SK-N-SH (cell line): ENCODE measurements at regions of chr4 and their contacts with region 1.

Region 1: GRCh38 chr4:42568610-42569207 is 88.2 kb downstream of the ATP8A1 start:
- DNase-seq: peak; percentile 64
- H3K4me3 ChIP-seq: no peak overlapping the region
- H3K27ac ChIP-seq: no peak overlapping the region
- H3K4me1 ChIP-seq: peaks cover 0 to 13% of the 10 kb centered on the region in 2 experiments; a peak in 2 of 4 replicates
- H3K27me3 ChIP-seq: no peaks in the 10 kb centered on the region
- CTCF ChIP-seq: peak; percentile 78
- EP300 ChIP-seq: no peak
- RAD21 ChIP-seq: peak; percentile 92

Region 2: DNA sequence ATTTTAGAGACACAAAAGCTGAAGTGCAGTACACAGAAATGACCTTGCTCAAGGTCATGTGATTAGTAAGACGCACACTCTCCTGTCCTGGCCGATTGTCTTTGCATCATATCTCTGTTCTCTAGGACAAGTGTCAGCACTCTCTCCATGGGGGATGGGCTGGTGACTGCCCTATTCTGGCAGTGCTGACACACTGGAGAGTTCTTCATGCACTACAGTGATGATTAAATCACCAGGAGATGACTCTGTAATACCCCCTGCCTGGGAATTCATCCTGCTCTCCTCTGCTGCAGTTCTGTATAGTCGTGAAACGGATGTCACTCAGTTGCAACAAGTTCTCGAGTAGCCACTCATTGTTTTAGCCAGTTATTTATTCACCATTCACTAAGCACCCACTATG is 176.7 kb before region 1 on chr4:
- CTCF ChIA-PET with region 1: no interaction called
- POLR2A ChIA-PET with region 1: no interaction called
- DNase-seq: no peak
- H3K4me3 ChIP-seq: no peak overlapping the region
- H3K27ac ChIP-seq: no peak overlapping the region
- H3K4me1 ChIP-seq: peaks cover 0 to 5% of the 10 kb centered on the region in 2 experiments; a peak in 1 of 4 replicates
- H3K27me3 ChIP-seq: peaks cover 8% of the 10 kb centered on the region
- CTCF ChIP-seq: no peak
- EP300 ChIP-seq: no peak
- RAD21 ChIP-seq: no peak

Region 3: DNA sequence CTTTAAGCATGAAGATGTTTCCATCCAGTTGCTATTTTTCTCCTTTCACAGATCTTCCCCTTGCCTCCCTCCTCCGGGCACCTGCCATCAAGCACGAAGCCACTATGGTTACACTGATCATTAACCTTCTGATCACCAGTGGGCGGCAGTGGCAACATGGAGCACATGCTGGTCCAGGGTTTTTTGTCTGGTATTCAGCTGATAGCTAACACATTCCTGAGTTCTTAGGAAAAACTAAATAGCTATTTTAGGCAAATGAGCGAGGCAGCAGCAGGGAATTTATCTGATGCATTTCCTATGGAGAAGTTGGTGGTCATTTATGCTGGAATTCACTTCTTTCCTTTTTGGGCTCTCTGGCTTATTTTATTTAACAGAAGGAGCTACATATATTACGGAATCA is 148.6 kb before region 1 on chr4:
- CTCF ChIA-PET with region 1: no interaction called
- POLR2A ChIA-PET with region 1: no interaction called
- DNase-seq: no peak
- H3K4me3 ChIP-seq: no peak overlapping the region
- H3K27ac ChIP-seq: no peak overlapping the region
- H3K4me1 ChIP-seq: no peaks in the 10 kb centered on the region; a peak in 1 of 4 replicates
- H3K27me3 ChIP-seq: no peaks in the 10 kb centered on the region
- CTCF ChIP-seq: no peak
- EP300 ChIP-seq: no peak
- RAD21 ChIP-seq: no peak

Region 4: GRCh38 chr4:42750091-42750490 is 181.4 kb after region 1 on chr4:
- CTCF ChIA-PET with region 1: interaction called, 18 read pairs
- POLR2A ChIA-PET with region 1: no interaction called
- DNase-seq: peak; percentile 39
- H3K4me3 ChIP-seq: no peak overlapping the region
- H3K27ac ChIP-seq: no peak overlapping the region
- H3K4me1 ChIP-seq: no peaks in the 10 kb centered on the region; a peak in 2 of 4 replicates
- H3K27me3 ChIP-seq: no peaks in the 10 kb centered on the region
- CTCF ChIP-seq: peak; percentile 28; the same call in 1 of the 2 replicates
- EP300 ChIP-seq: no peak
- RAD21 ChIP-seq: peak; percentile 85

Region 5: DNA sequence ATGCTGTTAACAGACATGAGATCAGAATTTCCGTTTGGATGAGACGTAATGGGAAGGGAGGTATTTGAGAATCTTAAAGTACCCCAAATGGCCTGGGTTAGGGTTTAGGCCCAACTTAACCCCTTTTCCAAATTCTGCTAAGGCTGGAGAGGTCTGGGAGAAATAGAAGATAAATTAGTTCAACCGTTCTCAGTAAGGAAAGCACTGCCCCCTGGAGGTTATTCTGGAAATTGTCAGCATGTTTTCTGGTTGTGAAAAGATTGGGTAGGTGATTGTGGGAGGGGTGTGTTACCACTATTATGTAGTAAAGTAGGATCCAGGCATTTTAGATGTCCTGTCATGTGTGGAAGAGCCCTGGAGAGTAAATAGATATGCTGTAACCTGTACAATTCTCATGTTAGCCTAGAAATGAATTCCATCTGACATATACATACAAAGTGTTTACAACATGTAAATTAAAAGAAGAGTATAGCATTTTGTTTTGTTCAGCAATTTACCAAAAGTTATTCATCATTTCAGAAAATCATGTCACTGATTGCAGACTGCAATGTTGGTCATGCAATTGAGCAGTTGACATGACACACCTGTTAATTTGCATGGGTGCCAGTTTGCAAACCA is 297.0 kb after region 1 on chr4:
- CTCF ChIA-PET with region 1: interaction called, 52 read pairs
- POLR2A ChIA-PET with region 1: no interaction called
- DNase-seq: peak; percentile 33
- H3K4me3 ChIP-seq: no peak overlapping the region; a peak in 1 of 4 replicates
- H3K27ac ChIP-seq: no peak overlapping the region
- H3K4me1 ChIP-seq: no peaks in the 10 kb centered on the region
- H3K27me3 ChIP-seq: no peaks in the 10 kb centered on the region
- CTCF ChIP-seq: peak; percentile 79
- EP300 ChIP-seq: no peak
- RAD21 ChIP-seq: peak; percentile 84